ENCODE measurements at regions of chr18 and their contacts with region 1.

Region 1: DNA sequence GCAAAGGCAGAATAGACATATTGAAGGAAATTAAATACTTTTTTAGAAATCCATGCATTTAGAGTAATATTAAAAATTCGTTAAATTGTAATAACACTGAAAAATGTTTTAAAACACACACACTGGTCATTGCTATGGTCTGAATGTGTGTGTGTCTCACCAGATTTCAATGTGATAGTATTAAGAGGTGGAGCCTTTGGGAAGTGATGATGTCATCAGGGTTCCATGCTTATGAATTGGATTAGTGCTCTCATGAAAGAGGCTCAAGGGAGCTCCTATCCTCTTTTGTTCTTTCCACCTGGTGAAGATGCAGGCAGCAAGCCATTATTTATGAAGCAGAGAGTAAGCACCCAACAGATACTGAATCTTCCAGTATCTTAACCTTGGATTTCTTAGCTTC is 441.8 kb downstream of the CDH2 start:
- DNase-seq: no peak
- ATAC-seq: no peak
- H3K4me3 ChIP-seq: no peak overlapping the region
- H3K27ac ChIP-seq: no peak overlapping the region
- H3K4me1 ChIP-seq: no peaks in the 10 kb centered on the region
- H3K27me3 ChIP-seq: no peaks in the 10 kb centered on the region
- CTCF ChIP-seq: no peak
- EP300 ChIP-seq: no peak
- POLR2A ChIP-seq: no peak
- RAD21 ChIP-seq: no peak

Region 2: GRCh38 chr18:27585601-27586173 is 149.4 kb before region 1 on chr18:
- CTCF ChIA-PET with region 1: no interaction called
- POLR2A ChIA-PET with region 1: no interaction called
- RAD21 ChIA-PET with region 1: no interaction called
- SMC1A ChIA-PET with region 1: no interaction called
- in situ Hi-C with region 1: no loop called
- intact Hi-C with region 1: no loop called
- DNase-seq: no peak
- ATAC-seq: no peak
- H3K4me3 ChIP-seq: no peak overlapping the region
- H3K27ac ChIP-seq: no peak overlapping the region
- H3K4me1 ChIP-seq: no peaks in the 10 kb centered on the region
- H3K27me3 ChIP-seq: no peaks in the 10 kb centered on the region
- CTCF ChIP-seq: no peak
- EP300 ChIP-seq: no peak
- POLR2A ChIP-seq: no peak
- RAD21 ChIP-seq: no peak

Region 3: GRCh38 chr18:27674411-27674810 is 60.7 kb before region 1 on chr18:
- CTCF ChIA-PET with region 1: no interaction called
- POLR2A ChIA-PET with region 1: no interaction called
- RAD21 ChIA-PET with region 1: no interaction called
- SMC1A ChIA-PET with region 1: no interaction called
- in situ Hi-C with region 1: no loop called
- intact Hi-C with region 1: loop called (anchors 10 kb)
- DNase-seq: no peak
- ATAC-seq: no peak
- H3K4me3 ChIP-seq: no peak overlapping the region
- H3K27ac ChIP-seq: no peak overlapping the region
- H3K4me1 ChIP-seq: no peaks in the 10 kb centered on the region
- H3K27me3 ChIP-seq: no peaks in the 10 kb centered on the region
- CTCF ChIP-seq: no peak
- EP300 ChIP-seq: no peak
- POLR2A ChIP-seq: no peak
- RAD21 ChIP-seq: no peak

Region 4: DNA sequence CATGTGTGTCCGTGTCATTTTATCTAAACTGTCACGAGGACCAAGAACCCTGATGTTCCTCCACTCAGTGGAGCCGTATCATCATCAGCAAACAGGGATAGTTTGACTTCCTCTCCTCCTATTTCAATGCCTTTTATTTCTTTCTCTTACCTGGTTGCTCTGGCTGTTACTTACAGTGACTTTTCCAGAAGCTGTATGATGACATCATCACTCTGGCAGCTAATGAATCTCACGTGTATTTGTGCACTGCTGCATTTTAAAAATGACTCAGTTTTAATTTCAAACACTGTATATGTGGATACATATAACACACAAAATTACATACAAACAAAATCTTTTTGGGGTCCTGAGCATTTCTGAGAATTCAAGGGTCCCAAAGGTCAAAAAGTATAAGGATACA is 39.6 kb before region 1 on chr18:
- CTCF ChIA-PET with region 1: no interaction called
- POLR2A ChIA-PET with region 1: no interaction called
- RAD21 ChIA-PET with region 1: no interaction called
- SMC1A ChIA-PET with region 1: no interaction called
- in situ Hi-C with region 1: no loop called
- intact Hi-C with region 1: no loop called
- DNase-seq: no peak
- ATAC-seq: no peak
- H3K4me3 ChIP-seq: no peak overlapping the region
- H3K27ac ChIP-seq: no peak overlapping the region
- H3K4me1 ChIP-seq: no peaks in the 10 kb centered on the region
- H3K27me3 ChIP-seq: no peaks in the 10 kb centered on the region
- CTCF ChIP-seq: no peak
- EP300 ChIP-seq: no peak
- POLR2A ChIP-seq: no peak
- RAD21 ChIP-seq: no peak